CD8-positive, alpha-beta T cell (primary cell): ENCODE measurements at regions of chr13 and their contacts with region 1.

Region 1: DNA sequence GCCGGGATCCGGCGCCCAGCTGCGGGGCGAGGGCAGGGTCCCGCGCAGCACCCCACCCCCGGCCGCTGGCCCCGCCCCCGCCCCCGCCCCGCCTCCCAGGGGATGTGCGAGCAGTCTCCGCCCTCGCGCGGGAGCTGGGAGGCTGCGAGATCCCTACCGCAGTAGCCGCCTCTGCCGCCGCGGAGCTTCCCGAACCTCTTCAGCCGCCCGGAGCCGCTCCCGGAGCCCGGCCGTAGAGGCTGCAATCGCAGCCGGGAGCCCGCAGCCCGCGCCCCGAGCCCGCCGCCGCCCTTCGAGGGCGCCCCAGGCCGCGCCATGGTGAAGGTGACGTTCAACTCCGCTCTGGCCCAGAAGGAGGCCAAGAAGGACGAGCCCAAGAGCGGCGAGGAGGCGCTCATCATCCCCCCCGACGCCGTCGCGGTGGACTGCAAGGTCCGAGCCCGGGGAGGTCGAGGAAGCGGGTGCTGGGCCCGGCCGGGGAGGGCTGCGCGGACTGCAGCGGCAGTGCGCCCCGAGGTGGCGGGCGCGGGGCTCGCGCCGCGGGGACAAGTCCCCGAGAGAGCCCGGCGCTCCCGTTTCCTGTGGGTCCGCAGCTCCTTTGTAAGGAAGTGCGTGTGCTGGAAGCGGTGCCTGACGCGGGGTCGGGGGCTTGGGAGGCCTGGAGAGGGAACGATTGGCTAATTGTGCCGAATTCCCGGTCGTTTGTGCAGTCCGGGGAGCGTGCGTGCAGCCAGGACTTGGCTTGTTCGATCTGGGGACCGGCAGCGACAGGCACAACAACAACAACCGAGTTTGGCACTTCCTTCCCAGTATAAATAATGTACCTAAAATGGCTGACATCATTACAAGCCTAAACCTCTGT is at the start of gene ITM2B:
- DNase-seq: peak; percentile 40 to 86 (median 64)
- ATAC-seq: peak; percentile 72
- H3K4me3 ChIP-seq: peak within 1 kb of the TSS; percentile 96 to 98
- H3K4me3 Mint-ChIP-seq: peak within 1 kb of the TSS; percentile 98
- H3K27ac ChIP-seq: peak within 1 kb of the TSS; percentile 92 to 94
- H3K27ac Mint-ChIP-seq: peak within 1 kb of the TSS; percentile 99
- H3K4me1 ChIP-seq: peaks cover 44% of the 10 kb centered on the region
- H3K4me1 Mint-ChIP-seq: peaks cover 62% of the 10 kb centered on the region
- H3K27me3 ChIP-seq: no peaks in the 10 kb centered on the region
- H3K27me3 Mint-ChIP-seq: no peaks in the 10 kb centered on the region
- CTCF ChIP-seq: peak; percentile 59
- total RNA-seq, gene ITM2B: 280 to 308 TPM

Region 2: DNA sequence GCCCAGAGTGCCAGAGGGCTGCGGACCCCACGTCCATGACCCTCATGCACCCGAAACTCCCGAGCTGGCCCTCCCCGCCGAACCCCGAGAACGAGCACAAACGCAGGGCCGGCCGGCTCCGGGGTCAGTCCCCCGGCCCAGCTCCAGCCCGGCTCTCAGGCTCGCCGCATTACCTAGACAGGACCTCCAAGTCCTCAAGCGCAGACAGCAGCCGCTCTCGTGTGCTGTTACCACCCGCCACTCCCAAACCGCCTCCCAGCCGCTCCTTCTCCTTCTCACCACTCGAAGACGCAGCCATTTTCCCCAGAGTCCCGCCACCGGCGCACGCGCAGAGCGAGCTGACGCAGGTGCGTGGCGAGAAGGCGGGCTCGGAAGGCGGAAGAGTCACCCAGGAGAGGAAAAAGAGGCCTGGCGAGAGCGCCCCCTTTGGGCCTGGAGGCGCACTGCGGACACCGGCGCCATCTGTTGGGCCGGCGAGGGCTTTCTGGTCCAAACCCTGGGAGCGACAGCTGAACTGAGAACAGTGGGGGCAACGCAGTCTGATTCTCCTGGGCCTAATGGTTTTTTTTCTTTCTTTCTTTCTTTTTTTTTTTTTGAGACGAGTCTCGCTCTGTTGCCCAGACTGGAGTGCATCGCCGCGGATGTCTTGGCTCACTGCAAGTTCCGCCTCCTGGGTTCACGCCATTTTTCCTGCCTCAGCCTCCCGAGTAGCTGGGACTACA is 138.3 kb before region 1 on chr13 and contains the start of gene MED4:
- CTCF ChIA-PET with region 1: interaction called, 14 read pairs
- POLR2A ChIA-PET with region 1: interaction called, 11 read pairs
- intact Hi-C with region 1: loop called in 1 of 2 experiments (anchors 1 kb)
- DNase-seq: peak; percentile 96 to 99 (median 97)
- ATAC-seq: peak; percentile 98
- H3K4me3 ChIP-seq: peak within 1 kb of the TSS; percentile 90 to 96
- H3K4me3 Mint-ChIP-seq: peak within 1 kb of the TSS; percentile 96
- H3K27ac ChIP-seq: peak within 1 kb of the TSS; percentile 90 to 92
- H3K27ac Mint-ChIP-seq: peak within 1 kb of the TSS; percentile 97
- H3K4me1 ChIP-seq: peaks cover 21% of the 10 kb centered on the region
- H3K4me1 Mint-ChIP-seq: peaks cover 45% of the 10 kb centered on the region
- H3K27me3 ChIP-seq: no peaks in the 10 kb centered on the region
- H3K27me3 Mint-ChIP-seq: no peaks in the 10 kb centered on the region
- CTCF ChIP-seq: peak; percentile 100
- total RNA-seq, gene MED4: 60.8 to 63.6 TPM

Region 3: GRCh38 chr13:48148454-48148853 is 84.8 kb before region 1 on chr13:
- CTCF ChIA-PET with region 1: interaction called, 5 read pairs
- POLR2A ChIA-PET with region 1: interaction called, 12 read pairs
- intact Hi-C with region 1: no loop called
- DNase-seq: no peak
- ATAC-seq: no peak
- H3K4me3 ChIP-seq: no peak overlapping the region
- H3K4me3 Mint-ChIP-seq: no peak overlapping the region
- H3K27ac ChIP-seq: no peak overlapping the region
- H3K27ac Mint-ChIP-seq: peak overlapping the region; percentile 84
- H3K4me1 ChIP-seq: peaks cover 63% of the 10 kb centered on the region
- H3K4me1 Mint-ChIP-seq: peaks cover 61% of the 10 kb centered on the region
- H3K27me3 ChIP-seq: no peaks in the 10 kb centered on the region
- H3K27me3 Mint-ChIP-seq: no peaks in the 10 kb centered on the region
- CTCF ChIP-seq: no peak

Region 4: DNA sequence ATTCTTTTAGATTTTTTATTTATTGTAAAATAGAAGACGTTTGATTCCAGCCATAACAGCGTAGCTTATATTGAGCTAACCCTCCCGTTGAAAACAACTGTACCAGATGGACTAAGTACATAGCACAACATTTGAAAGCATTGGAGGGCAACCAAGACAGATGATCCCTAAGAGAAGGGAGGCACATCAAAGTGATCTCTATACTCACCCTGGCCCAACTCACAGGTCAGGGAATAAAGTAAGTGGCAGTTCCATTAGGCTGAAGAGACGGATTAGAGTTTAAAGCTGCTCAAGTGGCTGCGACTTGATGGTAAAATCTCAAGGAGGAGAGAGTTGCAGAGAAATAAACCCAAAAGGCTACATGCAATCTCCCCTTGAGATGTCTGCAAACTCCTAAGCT is 65.4 kb before region 1 on chr13:
- CTCF ChIA-PET with region 1: interaction called, 10 read pairs
- POLR2A ChIA-PET with region 1: interaction called, 5 read pairs
- intact Hi-C with region 1: no loop called
- DNase-seq: no peak
- ATAC-seq: no peak
- H3K4me3 ChIP-seq: no peak overlapping the region
- H3K4me3 Mint-ChIP-seq: no peak overlapping the region
- H3K27ac ChIP-seq: no peak overlapping the region
- H3K27ac Mint-ChIP-seq: no peak overlapping the region
- H3K4me1 ChIP-seq: peaks cover 3% of the 10 kb centered on the region
- H3K4me1 Mint-ChIP-seq: peaks cover 5% of the 10 kb centered on the region
- H3K27me3 ChIP-seq: no peaks in the 10 kb centered on the region
- H3K27me3 Mint-ChIP-seq: no peaks in the 10 kb centered on the region
- CTCF ChIP-seq: no peak

Region 5: GRCh38 chr13:48222358-48223301 is 10.6 kb before region 1 on chr13:
- CTCF ChIA-PET with region 1: interaction called, 14 read pairs
- POLR2A ChIA-PET with region 1: interaction called, 70 read pairs
- intact Hi-C with region 1: loop called (anchors 1 kb)
- DNase-seq: peak in 1 of 9 experiments; percentile 27
- ATAC-seq: peak; percentile 35
- H3K4me3 ChIP-seq: peak overlapping the region in 1 of 2 experiments; percentile 42
- H3K4me3 Mint-ChIP-seq: peak overlapping the region; percentile 73
- H3K27ac ChIP-seq: peak overlapping the region; percentile 29 to 86
- H3K27ac Mint-ChIP-seq: peak overlapping the region; percentile 91
- H3K4me1 ChIP-seq: peaks cover 54% of the 10 kb centered on the region
- H3K4me1 Mint-ChIP-seq: peaks cover 65% of the 10 kb centered on the region
- H3K27me3 ChIP-seq: no peaks in the 10 kb centered on the region
- H3K27me3 Mint-ChIP-seq: no peaks in the 10 kb centered on the region
- CTCF ChIP-seq: no peak

Region 6: GRCh38 chr13:48532506-48533499 is 299.5 kb after region 1 on chr13 and contains the start of gene RCBTB2:
- CTCF ChIA-PET with region 1: no interaction called
- POLR2A ChIA-PET with region 1: interaction called, 3 read pairs
- intact Hi-C with region 1: loop called in 1 of 2 experiments (anchors 10 kb)
- DNase-seq: peak; percentile 95 to 100 (median 99)
- ATAC-seq: peak; percentile 89
- H3K4me3 ChIP-seq: peak within 1 kb of the TSS; percentile 88 to 93
- H3K4me3 Mint-ChIP-seq: peak within 1 kb of the TSS; percentile 96
- H3K27ac ChIP-seq: peak within 1 kb of the TSS; percentile 90 to 97
- H3K27ac Mint-ChIP-seq: peak within 1 kb of the TSS; percentile 99
- H3K4me1 ChIP-seq: peaks cover 14% of the 10 kb centered on the region
- H3K4me1 Mint-ChIP-seq: peaks cover 23% of the 10 kb centered on the region
- H3K27me3 ChIP-seq: no peaks in the 10 kb centered on the region
- H3K27me3 Mint-ChIP-seq: no peaks in the 10 kb centered on the region
- CTCF ChIP-seq: no peak
- total RNA-seq, gene RCBTB2: 1.5 to 2.0 TPM